ENCODE measurements at regions of chr15 and their contacts with region 1.

Region 1: GRCh38 chr15:57561041-57561711 is 30.5 kb upstream of the MYZAP start:
- DNase-seq: peak; percentile 76
- H3K4me3 ChIP-seq: no peak overlapping the region
- H3K27ac ChIP-seq: peak overlapping the region in 1 of 4 donors; percentile 46
- H3K4me1 ChIP-seq: peaks cover 10 to 28% (median 19%) of the 10 kb centered on the region in 4 donors
- H3K27me3 ChIP-seq: no peaks in the 10 kb centered on the region
- CTCF ChIP-seq: peak; percentile 86 to 95 (median 92)
- EP300 ChIP-seq: no peak
- POLR2A ChIP-seq: no peak

Region 2: GRCh38 chr15:57611938-57612337 is 50.8 kb after region 1 on chr15:
- in situ Hi-C with region 1: loop called in 2 of 4 experiments (anchors 5 to 10 kb)
- intact Hi-C with region 1: loop called (anchors 5 kb)
- DNase-seq: peak; percentile 74
- H3K4me3 ChIP-seq: no peak overlapping the region
- H3K27ac ChIP-seq: peak overlapping the region; percentile 77 to 86 (median 83)
- H3K4me1 ChIP-seq: peaks cover 30 to 74% (median 45%) of the 10 kb centered on the region in 4 donors
- H3K27me3 ChIP-seq: no peaks in the 10 kb centered on the region
- CTCF ChIP-seq: peak; percentile 41 to 67 (median 47)
- EP300 ChIP-seq: no peak
- POLR2A ChIP-seq: no peak